Right lobe of liver (tissue), 6 donors: ENCODE measurements at regions of chr3 and their contacts with region 1.

Region 1: DNA sequence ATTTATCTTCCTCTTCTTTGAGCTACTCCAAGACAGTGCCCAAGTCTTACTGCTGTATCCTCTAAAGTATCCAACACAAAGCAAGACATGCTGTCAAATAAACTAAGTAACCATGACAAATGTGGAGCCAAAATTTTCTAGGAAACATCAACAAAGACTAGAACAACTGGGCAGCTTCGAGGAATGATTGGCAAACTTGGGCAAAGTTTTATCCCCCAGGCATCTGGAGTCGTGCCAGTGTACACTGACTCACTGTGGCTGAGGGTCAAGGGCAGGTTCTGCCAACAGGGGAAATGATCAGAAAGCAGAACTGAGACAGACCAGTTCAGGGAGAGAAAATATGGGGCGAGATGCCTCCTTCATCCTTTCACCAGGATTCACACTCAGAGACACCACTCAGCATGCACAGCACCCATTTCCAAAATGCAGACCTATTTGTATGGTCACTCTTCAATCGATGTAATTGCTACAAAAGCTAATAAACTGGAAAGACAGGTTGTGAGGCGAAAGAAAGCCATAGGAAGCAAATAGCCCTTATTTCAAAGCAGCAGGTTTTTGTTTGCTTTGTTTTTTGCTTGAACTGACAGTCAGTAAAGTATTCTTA is 65.7 kb downstream of the MB21D2 start:
- DNase-seq: peak; percentile 82 to 83 (median 83)
- ATAC-seq: peak; percentile 93 to 98 (median 94)
- H3K4me3 ChIP-seq: no peak overlapping the region
- H3K27ac ChIP-seq: no peak overlapping the region
- H3K4me1 ChIP-seq: peaks cover 0 to 16% (median 7%) of the 10 kb centered on the region in 4 donors
- H3K27me3 ChIP-seq: peaks cover 0 to 6% of the 10 kb centered on the region in 2 donors
- CTCF ChIP-seq: no peak
- POLR2A ChIP-seq: no peak

Region 2: GRCh38 chr3:192917404-192918274 is 65.7 kb after region 1 on chr3 and contains the start of gene MB21D2:
- intact Hi-C with region 1: loop called in 1 of 2 experiments (anchors 10 kb)
- DNase-seq: peak; percentile 59 to 72 (median 71)
- ATAC-seq: peak; percentile 73 to 88 (median 82)
- H3K4me3 ChIP-seq: peak within 1 kb of the TSS; percentile 41 to 57 (median 57)
- H3K27ac ChIP-seq: peak within 1 kb of the TSS; percentile 37 to 66 (median 53)
- H3K4me1 ChIP-seq: peaks cover 0 to 11% (median 0%) of the 10 kb centered on the region in 4 donors
- H3K27me3 ChIP-seq: peaks cover 0 to 15% of the 10 kb centered on the region in 2 donors
- CTCF ChIP-seq: no peak
- POLR2A ChIP-seq: peak; percentile 34
- total RNA-seq, gene MB21D2: 0.15 to 0.86 (median 0.31) TPM in 5 of 6 experiments, not detected in the other